ENCODE measurements at regions of chr6 and their contacts with region 1.

Region 1: GRCh38 chr6:89339565-89339964 is 13.0 kb downstream of the UBE2J1 start:
- DNase-seq: peak in 1 of 4 experiments; percentile 43
- ATAC-seq: peak; percentile 82
- H3K4me3 ChIP-seq: no peak overlapping the region
- H3K27ac ChIP-seq: peak overlapping the region; percentile 15; the same call in 1 of the 3 replicates
- H3K4me1 ChIP-seq: peaks cover 3 to 5% of the 10 kb centered on the region in 2 experiments; a peak in 2 of 5 replicates
- H3K27me3 ChIP-seq: no peaks in the 10 kb centered on the region
- CTCF ChIP-seq: no peak
- EP300 ChIP-seq: no peak
- POLR2A ChIP-seq: no peak
- RAD21 ChIP-seq: no peak

Region 2: GRCh38 chr6:89352278-89353117 is 12.9 kb after region 1 on chr6 and contains the start of gene UBE2J1:
- CTCF ChIA-PET with region 1: no interaction called
- POLR2A ChIA-PET with region 1: interaction called, 29 read pairs
- in situ Hi-C with region 1: no loop called
- intact Hi-C with region 1: no loop called
- DNase-seq: peak; percentile 78 to 84 (median 82)
- ATAC-seq: peak; percentile 94
- H3K4me3 ChIP-seq: peak within 1 kb of the TSS; percentile 73
- H3K27ac ChIP-seq: peak within 1 kb of the TSS; percentile 91
- H3K4me1 ChIP-seq: peaks cover 18 to 19% of the 10 kb centered on the region in 2 experiments
- H3K27me3 ChIP-seq: no peaks in the 10 kb centered on the region
- CTCF ChIP-seq: no peak
- EP300 ChIP-seq: no peak
- POLR2A ChIP-seq: peak; percentile 80
- RAD21 ChIP-seq: no peak
- polyA plus RNA-seq, gene UBE2J1: 11.6 to 14.9 TPM

Region 3: DNA sequence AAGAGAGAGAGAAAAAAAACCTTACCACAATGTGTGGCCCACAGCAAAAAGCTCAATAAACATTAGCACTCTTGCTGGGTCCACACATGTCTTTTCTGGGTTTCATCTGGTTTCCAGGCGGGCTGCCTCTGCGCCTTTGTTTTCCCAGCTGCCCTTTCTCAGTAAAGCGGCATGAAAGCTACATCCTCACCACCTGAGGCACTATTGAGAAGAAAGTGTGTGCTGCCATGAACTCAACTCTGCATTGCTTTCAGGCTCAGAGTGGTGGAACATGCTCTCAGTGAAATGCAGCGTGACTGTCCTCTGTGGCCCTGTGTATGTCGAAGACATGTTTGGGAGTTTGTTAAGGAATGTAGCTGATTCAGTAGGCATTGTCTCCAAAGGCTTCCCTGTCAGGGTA is 196.7 kb after region 1 on chr6:
- CTCF ChIA-PET with region 1: no interaction called
- POLR2A ChIA-PET with region 1: no interaction called
- in situ Hi-C with region 1: no loop called
- intact Hi-C with region 1: no loop called
- DNase-seq: peak in 1 of 4 experiments; percentile 6
- ATAC-seq: peak; percentile 74
- H3K4me3 ChIP-seq: no peak overlapping the region
- H3K27ac ChIP-seq: no peak overlapping the region
- H3K4me1 ChIP-seq: no peaks in the 10 kb centered on the region
- H3K27me3 ChIP-seq: peaks cover 2 to 11% of the 10 kb centered on the region in 2 experiments; a peak in 3 of 5 replicates
- CTCF ChIP-seq: 0 out of 6 replicates have a peak, but pooled peaks of 2 of the 3 experiments have one; percentile 13 to 19
- EP300 ChIP-seq: no peak
- POLR2A ChIP-seq: no peak
- RAD21 ChIP-seq: no peak; a peak in 1 of 4 replicates

Region 4: GRCh38 chr6:89574910-89575561 is 235.5 kb after region 1 on chr6:
- CTCF ChIA-PET with region 1: no interaction called
- POLR2A ChIA-PET with region 1: no interaction called
- in situ Hi-C with region 1: no loop called
- intact Hi-C with region 1: no loop called
- DNase-seq: no peak
- ATAC-seq: no peak
- H3K4me3 ChIP-seq: no peak overlapping the region
- H3K27ac ChIP-seq: no peak overlapping the region
- H3K4me1 ChIP-seq: no peaks in the 10 kb centered on the region
- H3K27me3 ChIP-seq: peaks cover 4 to 8% of the 10 kb centered on the region in 2 experiments; a peak in 4 of 5 replicates
- CTCF ChIP-seq: no peak
- EP300 ChIP-seq: no peak
- POLR2A ChIP-seq: no peak
- RAD21 ChIP-seq: no peak